Left colon (tissue), 2 donors: ENCODE measurements at regions of chr7 and their contacts with region 1.

Region 1: GRCh38 chr7:97104719-97105238 is 12.7 kb upstream of the SDHAF3 start:
- DNase-seq: peak; percentile 55 to 87
- ATAC-seq: peak; percentile 92

Region 2: GRCh38 chr7:97179454-97180104 is 74.8 kb after region 1 on chr7:
- intact Hi-C with region 1: loop called in 1 of 2 experiments (anchors 5 kb)
- DNase-seq: peak in 1 of 2 donors; percentile 16
- ATAC-seq: peak; percentile 57

Region 3: DNA sequence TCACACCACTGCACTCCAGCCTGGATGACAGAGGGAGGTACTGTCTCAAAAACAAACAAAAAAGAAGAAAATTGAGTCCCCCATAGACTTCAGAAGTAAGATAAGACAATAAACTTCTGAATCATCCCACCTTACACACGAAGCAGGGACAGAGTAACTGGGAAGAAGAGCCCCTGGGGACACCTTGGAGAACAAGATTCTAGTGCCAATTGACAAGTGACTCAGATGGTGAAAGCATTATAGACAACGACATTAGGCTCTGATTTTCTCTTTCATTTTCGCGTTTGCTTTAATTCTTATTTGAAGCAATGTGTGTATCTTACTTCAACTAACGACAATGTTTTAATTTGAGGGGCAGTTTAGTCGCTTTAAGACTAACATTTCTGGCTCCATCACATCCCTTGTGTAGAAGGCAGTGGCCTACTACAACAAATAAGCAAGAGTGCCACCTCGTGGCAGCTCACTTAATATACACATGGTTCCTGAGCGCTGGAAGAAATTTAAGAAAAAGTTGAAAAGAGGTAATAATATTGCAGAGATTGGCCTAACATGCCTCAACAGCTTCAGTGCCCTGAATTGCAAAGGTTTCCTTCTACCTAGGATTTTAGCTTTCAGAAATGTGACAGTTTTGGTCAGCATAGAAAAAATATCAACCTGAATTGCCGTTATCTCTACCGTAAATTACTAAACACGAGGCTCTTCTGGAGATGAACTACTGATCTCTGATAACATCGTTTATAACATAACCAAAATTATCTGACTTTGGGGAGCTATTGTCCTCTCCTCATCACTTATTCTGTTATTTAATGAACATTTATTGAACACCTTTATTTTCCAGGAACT is 730.7 kb after region 1 on chr7:
- intact Hi-C with region 1: loop called in 1 of 2 experiments (anchors 5 kb)
- DNase-seq: peak; percentile 38 to 83
- ATAC-seq: peak; percentile 81